H1 (cell line): ENCODE measurements at regions of chr9 and their contacts with region 1.

Region 1: DNA sequence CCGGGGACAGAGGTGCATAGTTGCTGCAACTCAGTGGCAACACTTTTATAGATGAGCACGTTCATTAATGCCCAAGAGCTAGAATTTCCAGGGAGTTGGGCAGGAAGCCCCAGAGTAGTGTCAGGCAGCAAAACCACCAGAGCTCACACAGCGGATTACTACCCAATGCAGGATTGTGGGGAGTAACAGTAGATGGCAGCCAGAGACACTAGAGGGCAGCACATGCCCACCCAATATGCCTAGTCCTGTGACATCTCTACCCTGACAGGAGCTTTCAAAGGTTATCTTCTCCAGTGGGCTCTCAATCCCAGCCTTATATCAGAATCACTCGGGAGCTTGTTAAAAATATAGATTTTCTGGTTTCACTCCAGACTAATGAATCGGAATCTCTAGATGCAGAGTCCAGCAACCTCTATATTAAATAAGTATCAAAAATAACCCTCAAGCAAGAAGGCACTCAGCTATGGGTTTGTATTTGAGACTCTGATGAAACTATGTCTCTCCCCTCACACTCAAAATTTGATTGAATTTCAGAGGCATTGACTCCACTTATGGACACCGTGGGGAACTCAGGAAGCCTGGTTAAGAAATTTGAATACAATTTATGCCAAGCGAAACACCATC is 58.4 kb upstream of the PHF24 start:
- DNase-seq: peak; percentile 31 to 86
- H3K4me3 ChIP-seq: no peak overlapping the region
- H3K27ac ChIP-seq: no peak overlapping the region
- H3K4me1 ChIP-seq: no peaks in the 10 kb centered on the region
- H3K27me3 ChIP-seq: peaks cover 0 to 3% (median 0%) of the 10 kb centered on the region in 4 experiments; a peak in 1 of 7 replicates
- CTCF ChIP-seq: peak; percentile 84 to 93 (median 91)
- EP300 ChIP-seq: no peak
- POLR2A ChIP-seq: no peak
- RAD21 ChIP-seq: peak; percentile 98 to 99

Region 2: GRCh38 chr9:34759432-34760134 is 140.1 kb before region 1 on chr9:
- CTCF ChIA-PET with region 1: interaction called, 63 read pairs
- POLR2A ChIA-PET with region 1: no interaction called
- DNase-seq: no peak
- H3K4me3 ChIP-seq: no peak overlapping the region
- H3K27ac ChIP-seq: no peak overlapping the region
- H3K4me1 ChIP-seq: no peaks in the 10 kb centered on the region
- H3K27me3 ChIP-seq: no peaks in the 10 kb centered on the region
- CTCF ChIP-seq: no peak
- EP300 ChIP-seq: no peak
- POLR2A ChIP-seq: no peak
- RAD21 ChIP-seq: no peak

Region 3: GRCh38 chr9:34929506-34930102 is 30.0 kb after region 1 on chr9:
- CTCF ChIA-PET with region 1: interaction called, 23 read pairs
- POLR2A ChIA-PET with region 1: no interaction called
- DNase-seq: peak; percentile 13 to 66
- H3K4me3 ChIP-seq: no peak overlapping the region
- H3K27ac ChIP-seq: no peak overlapping the region
- H3K4me1 ChIP-seq: no peaks in the 10 kb centered on the region
- H3K27me3 ChIP-seq: no peaks in the 10 kb centered on the region
- CTCF ChIP-seq: peak; percentile 56 to 81 (median 66)
- EP300 ChIP-seq: no peak
- POLR2A ChIP-seq: no peak
- RAD21 ChIP-seq: peak; percentile 42 to 50

Region 4: GRCh38 chr9:34964458-34964857 is 64.8 kb after region 1 on chr9:
- CTCF ChIA-PET with region 1: interaction called, 37 read pairs
- POLR2A ChIA-PET with region 1: no interaction called
- DNase-seq: no peak
- H3K4me3 ChIP-seq: no peak overlapping the region
- H3K27ac ChIP-seq: no peak overlapping the region
- H3K4me1 ChIP-seq: peaks cover 0 to 4% (median 0%) of the 10 kb centered on the region in 4 experiments; a peak in 3 of 7 replicates
- H3K27me3 ChIP-seq: peaks cover 0 to 4% (median under 1%) of the 10 kb centered on the region in 4 experiments; a peak in 3 of 7 replicates
- CTCF ChIP-seq: no peak
- EP300 ChIP-seq: no peak
- POLR2A ChIP-seq: no peak
- RAD21 ChIP-seq: no peak

Region 5: DNA sequence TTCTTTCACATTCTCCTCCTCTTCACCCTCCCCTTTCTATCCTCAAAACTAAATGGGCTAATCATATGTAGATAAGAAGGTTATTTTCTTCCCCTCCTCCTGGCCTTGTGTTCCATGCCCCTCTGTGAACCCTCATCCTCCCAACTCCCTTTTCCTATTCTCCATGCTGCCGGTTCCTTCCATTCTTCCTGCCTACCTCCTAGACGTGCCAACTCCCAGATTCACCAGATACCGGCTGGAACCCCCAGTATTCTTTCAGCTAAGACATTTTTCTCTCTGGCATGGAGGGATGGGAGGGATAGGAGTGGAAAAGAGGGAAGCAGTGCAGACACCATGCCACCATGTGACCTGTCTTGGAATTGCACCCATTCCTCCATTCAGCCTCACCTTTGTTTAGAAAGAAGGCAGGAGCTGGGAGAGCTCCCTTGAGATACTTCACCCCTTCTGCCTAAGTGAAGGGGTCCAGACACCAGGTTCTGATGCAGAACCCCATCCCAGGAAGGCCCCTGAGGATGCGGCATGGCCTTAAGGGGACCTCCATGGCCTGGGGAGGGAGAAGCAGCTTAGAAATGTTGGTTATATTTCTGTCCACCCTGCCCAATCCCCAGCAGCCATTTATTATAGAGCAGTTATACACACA is 94.7 kb after region 1 on chr9:
- CTCF ChIA-PET with region 1: interaction called, 148 read pairs
- POLR2A ChIA-PET with region 1: interaction called, 6 read pairs
- DNase-seq: peak in 1 of 2 experiments; percentile 71
- H3K4me3 ChIP-seq: no peak overlapping the region
- H3K27ac ChIP-seq: peak overlapping the region; percentile 35; the same call in 1 of the 2 replicates
- H3K4me1 ChIP-seq: peaks cover 18 to 36% (median 30%) of the 10 kb centered on the region in 4 experiments
- H3K27me3 ChIP-seq: no peaks in the 10 kb centered on the region
- CTCF ChIP-seq: peak; percentile 61 to 85 (median 73)
- EP300 ChIP-seq: no peak
- POLR2A ChIP-seq: no peak
- RAD21 ChIP-seq: peak; percentile 73 to 78

Region 6: DNA sequence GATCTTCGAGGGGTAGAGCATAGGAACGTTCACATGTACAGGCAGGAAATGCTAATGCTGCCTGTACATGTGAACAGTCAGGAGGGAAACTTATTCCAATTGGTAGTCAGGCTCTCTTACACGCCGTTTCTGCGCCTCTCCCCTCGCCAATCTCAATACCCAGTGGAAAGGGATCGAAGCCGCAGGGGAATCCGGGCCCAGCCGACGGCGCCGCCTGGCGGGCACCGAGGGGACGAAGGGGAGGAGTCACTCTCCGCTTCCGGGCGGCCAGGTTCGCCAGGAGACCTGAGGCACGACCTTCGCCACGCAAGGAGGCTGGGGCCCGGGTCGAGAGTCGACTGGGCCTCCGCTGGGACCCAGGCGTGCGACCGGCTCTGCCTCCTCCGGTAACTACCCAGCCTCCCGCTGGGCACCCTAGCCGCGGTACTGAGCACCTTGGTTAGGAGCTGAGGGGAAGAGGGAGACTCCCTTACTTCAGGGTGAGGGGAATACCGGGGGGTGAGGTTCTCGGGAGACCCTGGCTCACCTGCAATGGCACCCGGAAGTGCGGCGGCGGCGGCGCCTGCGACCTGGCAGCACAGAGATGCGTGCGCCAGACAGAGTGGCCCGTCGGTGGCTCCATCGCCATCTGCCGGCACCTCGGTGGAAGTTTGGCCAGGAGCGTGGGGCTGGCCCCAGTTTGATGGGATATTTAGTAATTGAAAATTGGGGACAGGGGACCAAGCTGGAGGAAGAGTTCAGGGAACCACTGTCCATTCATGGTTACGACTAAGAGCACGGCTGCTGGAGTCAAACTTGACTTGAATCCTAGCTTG is 196.6 kb after region 1 on chr9 and contains the start of gene PIGO:
- CTCF ChIA-PET with region 1: interaction called, 13 read pairs
- POLR2A ChIA-PET with region 1: no interaction called
- DNase-seq: peak; percentile 74 to 96
- H3K4me3 ChIP-seq: peak within 1 kb of the TSS; percentile 69 to 98 (median 86)
- H3K27ac ChIP-seq: peak within 1 kb of the TSS; percentile 96
- H3K4me1 ChIP-seq: peaks cover 0 to 2% (median under 1%) of the 10 kb centered on the region in 4 experiments; a peak in 3 of 7 replicates
- H3K27me3 ChIP-seq: no peaks in the 10 kb centered on the region
- CTCF ChIP-seq: peak; percentile 88 to 96 (median 93)
- EP300 ChIP-seq: no peak
- POLR2A ChIP-seq: peak; percentile 94 to 98
- RAD21 ChIP-seq: peak; percentile 55 to 72
- total RNA-seq, gene PIGO: 20.3 and 20.5 TPM in 2 replicates